ENCODE measurements at regions of chr21 and their contacts with region 1.

Region 1: GRCh38 chr21:33976082-33977016 is 60.7 kb upstream of the ATP5PO start:
- DNase-seq: peak in 8 of 9 donors; percentile 23 to 62 (median 32)
- ATAC-seq: peak; percentile 62
- H3K4me3 ChIP-seq: peak overlapping the region; percentile 18
- H3K4me3 Mint-ChIP-seq: peak overlapping the region; percentile 43 to 78 (median 72)
- H3K27ac ChIP-seq: peak overlapping the region; percentile 64
- H3K27ac Mint-ChIP-seq: peak overlapping the region; percentile 79 to 99 (median 86)
- H3K4me1 ChIP-seq: peaks cover 28 to 32% of the 10 kb centered on the region in 2 donors
- H3K4me1 Mint-ChIP-seq: peaks cover 36 to 73% (median 53%) of the 10 kb centered on the region in 7 donors
- H3K27me3 ChIP-seq: no peaks in the 10 kb centered on the region
- H3K27me3 Mint-ChIP-seq: no peaks in the 10 kb centered on the region

Region 2: DNA sequence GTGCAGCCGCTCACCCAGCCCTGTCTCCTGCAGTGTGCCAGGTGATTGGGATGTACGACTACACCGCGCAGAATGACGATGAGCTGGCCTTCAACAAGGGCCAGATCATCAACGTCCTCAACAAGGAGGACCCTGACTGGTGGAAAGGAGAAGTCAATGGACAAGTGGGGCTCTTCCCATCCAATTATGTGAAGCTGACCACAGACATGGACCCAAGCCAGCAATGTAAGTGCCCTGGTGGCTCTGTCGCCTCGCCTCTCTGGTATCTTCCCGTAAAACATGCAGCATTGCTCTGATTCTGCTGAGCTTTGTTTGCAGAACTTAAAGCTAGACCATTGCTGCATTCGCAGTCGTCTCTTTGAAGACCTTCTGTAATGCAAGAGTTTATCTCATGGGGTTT is 139.9 kb before region 1 on chr21:
- CTCF ChIA-PET with region 1: no interaction called
- POLR2A ChIA-PET with region 1: no interaction called
- intact Hi-C with region 1: no loop called
- DNase-seq: no peak
- ATAC-seq: no peak
- H3K4me3 ChIP-seq: no peak overlapping the region
- H3K4me3 Mint-ChIP-seq: no peak overlapping the region
- H3K27ac ChIP-seq: no peak overlapping the region
- H3K27ac Mint-ChIP-seq: no peak overlapping the region
- H3K4me1 ChIP-seq: no peaks in the 10 kb centered on the region
- H3K4me1 Mint-ChIP-seq: no peaks in the 10 kb centered on the region
- H3K27me3 ChIP-seq: no peaks in the 10 kb centered on the region
- H3K27me3 Mint-ChIP-seq: no peaks in the 10 kb centered on the region

Region 3: GRCh38 chr21:33931799-33932390 is 44.5 kb before region 1 on chr21:
- CTCF ChIA-PET with region 1: no interaction called
- POLR2A ChIA-PET with region 1: interaction called, 6 read pairs
- intact Hi-C with region 1: loop called (anchors 1 to 2 kb)
- DNase-seq: no peak
- ATAC-seq: peak; percentile 40
- H3K4me3 ChIP-seq: peak overlapping the region; percentile 77
- H3K4me3 Mint-ChIP-seq: peak overlapping the region; percentile 94 to 100 (median 98)
- H3K27ac ChIP-seq: peak overlapping the region; percentile 94
- H3K27ac Mint-ChIP-seq: peak overlapping the region; percentile 97 to 100 (median 99)
- H3K4me1 ChIP-seq: peaks cover 30 to 48% of the 10 kb centered on the region in 2 donors
- H3K4me1 Mint-ChIP-seq: peaks cover 18 to 59% (median 44%) of the 10 kb centered on the region in 7 donors
- H3K27me3 ChIP-seq: no peaks in the 10 kb centered on the region
- H3K27me3 Mint-ChIP-seq: no peaks in the 10 kb centered on the region

Region 4: DNA sequence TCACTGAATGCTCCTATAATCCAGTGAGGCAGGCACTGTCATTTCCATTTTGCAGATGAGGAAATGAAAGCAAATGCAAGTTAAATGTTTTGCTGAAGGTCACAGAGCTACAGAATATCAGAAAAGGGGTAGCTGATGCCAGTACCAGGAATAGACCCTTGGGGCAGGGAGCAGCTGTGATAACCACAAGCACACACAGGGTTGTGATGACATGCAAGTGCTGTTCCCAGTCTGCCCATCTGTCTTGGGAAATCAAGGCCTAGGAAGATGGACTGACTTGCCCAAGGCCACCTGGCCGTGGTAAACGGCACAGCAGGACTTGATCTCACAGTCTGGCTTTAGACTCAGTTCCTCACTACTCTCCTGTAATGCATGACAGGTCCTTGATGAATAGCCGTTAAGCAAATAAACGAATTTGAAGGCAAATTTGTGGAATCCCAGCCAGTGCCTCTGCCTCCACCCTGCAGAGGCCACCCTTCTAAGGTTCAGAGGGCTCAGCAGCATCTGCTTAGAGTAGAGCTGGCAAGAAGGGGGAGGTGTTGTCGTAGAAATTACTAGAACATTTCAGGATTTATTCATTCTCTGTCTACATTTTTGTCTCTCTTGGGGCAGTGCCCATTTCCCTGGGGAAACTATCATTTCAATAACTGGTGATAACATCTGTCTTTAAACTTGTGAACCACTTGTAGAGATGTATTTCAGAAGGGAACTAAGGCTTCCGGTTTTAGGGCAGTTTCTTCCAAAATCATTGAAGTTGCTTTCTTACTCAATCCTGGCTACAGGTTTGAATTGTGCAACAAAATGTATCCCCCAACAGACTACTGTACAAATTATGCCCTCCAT is 43.9 kb after region 1 on chr21:
- CTCF ChIA-PET with region 1: no interaction called
- POLR2A ChIA-PET with region 1: interaction called, 4 read pairs
- intact Hi-C with region 1: loop called in 1 of 2 experiments (anchors 5 kb)
- DNase-seq: no peak
- ATAC-seq: peak; percentile 42
- H3K4me3 ChIP-seq: no peak overlapping the region
- H3K4me3 Mint-ChIP-seq: peak overlapping the region in 3 of 10 donors; percentile 3 to 26 (median 5)
- H3K27ac ChIP-seq: no peak overlapping the region
- H3K27ac Mint-ChIP-seq: peak overlapping the region in 4 of 9 donors; percentile 3 to 37 (median 27)
- H3K4me1 ChIP-seq: peaks cover 15 to 26% of the 10 kb centered on the region in 2 donors
- H3K4me1 Mint-ChIP-seq: peaks cover 15 to 47% (median 21%) of the 10 kb centered on the region in 7 donors
- H3K27me3 ChIP-seq: no peaks in the 10 kb centered on the region
- H3K27me3 Mint-ChIP-seq: no peaks in the 10 kb centered on the region

Measured in naive thymus-derived CD4-positive, alpha-beta T cell (primary cell).